Esophagus muscularis mucosa (tissue), 4 donors: ENCODE measurements at regions of chr5 and their contacts with region 1.

Region 1: DNA sequence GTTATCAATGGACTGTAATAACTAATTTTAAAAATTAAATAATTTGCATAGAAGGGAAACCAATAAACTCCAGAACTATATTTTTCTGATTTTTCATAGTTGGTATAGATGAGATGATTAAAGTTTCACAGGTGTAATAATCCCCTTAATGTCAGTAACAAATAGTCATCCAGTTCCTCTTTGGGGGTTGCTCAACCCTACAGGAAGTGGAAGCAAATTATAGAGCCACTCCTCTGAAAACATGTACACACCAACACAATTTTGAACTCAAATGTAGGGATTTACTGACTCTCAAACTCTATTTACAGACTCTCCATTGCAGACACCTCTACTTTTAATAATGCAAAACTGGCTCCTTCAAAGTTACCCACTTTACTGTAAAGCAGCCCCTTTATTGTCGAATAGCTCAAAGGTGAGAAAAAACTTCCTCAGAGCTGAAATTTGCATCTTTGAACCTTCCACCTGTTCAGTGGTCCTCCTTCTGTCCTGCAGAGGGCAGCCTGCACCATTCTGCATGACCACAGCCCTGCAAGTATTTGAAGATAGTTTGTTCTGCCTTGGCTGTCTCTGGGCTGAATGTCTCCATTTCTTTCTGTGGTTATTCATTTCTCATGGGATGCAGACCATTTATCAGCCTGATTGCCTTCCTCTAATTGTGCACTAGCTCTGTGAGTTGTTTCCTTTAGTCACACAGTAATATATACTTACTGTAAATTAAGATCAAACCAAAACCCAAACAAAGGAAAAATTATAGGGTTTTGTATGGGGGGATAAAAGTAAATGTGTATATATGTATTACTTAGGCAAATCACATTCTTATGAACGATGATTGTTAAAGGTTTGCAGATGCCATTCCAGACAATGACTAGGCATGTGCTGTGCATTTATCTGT is 383.2 kb upstream of the SGCD start:
- DNase-seq: no peak
- H3K4me3 ChIP-seq: no peak overlapping the region
- H3K27ac ChIP-seq: no peak overlapping the region
- H3K4me1 ChIP-seq: no peaks in the 10 kb centered on the region
- H3K27me3 ChIP-seq: no peaks in the 10 kb centered on the region
- CTCF ChIP-seq: peak; percentile 66 to 83 (median 80)
- EP300 ChIP-seq: no peak
- POLR2A ChIP-seq: no peak

Region 2: DNA sequence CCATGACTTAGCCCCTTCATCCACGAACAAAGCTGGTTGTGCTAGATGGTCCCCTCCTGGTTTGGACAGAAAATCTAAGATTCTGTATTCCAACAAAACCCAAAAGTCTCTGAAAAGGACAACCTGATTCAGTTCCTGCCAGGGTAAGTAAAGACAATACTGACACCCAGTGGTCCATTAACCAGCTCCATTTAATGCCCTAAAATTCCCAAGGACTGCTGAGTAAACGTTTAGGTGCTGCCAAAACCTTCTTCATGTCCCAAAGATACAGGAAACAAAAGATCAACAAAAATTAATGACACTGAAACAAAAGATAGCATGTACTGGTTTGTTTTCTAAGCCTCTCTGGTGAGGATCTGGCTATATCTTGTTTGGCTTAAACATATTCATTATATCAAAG is 881.0 kb after region 1 on chr5:
- intact Hi-C with region 1: loop called (anchors 2 kb)
- DNase-seq: no peak
- H3K4me3 ChIP-seq: no peak overlapping the region
- H3K27ac ChIP-seq: no peak overlapping the region
- H3K4me1 ChIP-seq: no peaks in the 10 kb centered on the region
- H3K27me3 ChIP-seq: no peaks in the 10 kb centered on the region
- CTCF ChIP-seq: peak; percentile 49 to 66 (median 52)
- EP300 ChIP-seq: no peak
- POLR2A ChIP-seq: no peak

Region 3: GRCh38 chr5:156934450-156935211 is 990.9 kb after region 1 on chr5:
- intact Hi-C with region 1: loop called (anchors 10 kb)
- DNase-seq: no peak
- H3K4me3 ChIP-seq: no peak overlapping the region
- H3K27ac ChIP-seq: no peak overlapping the region
- H3K4me1 ChIP-seq: no peaks in the 10 kb centered on the region
- H3K27me3 ChIP-seq: no peaks in the 10 kb centered on the region
- CTCF ChIP-seq: peak; percentile 31 to 52 (median 35)
- EP300 ChIP-seq: no peak
- POLR2A ChIP-seq: no peak